Activated T-helper 2 cell treated with anti-CD3 and anti-CD28 coated beads, Interferon-gamma antibody, Interleukin-2, Interleukin-4, amounts not matched to agents 10 μg/mL and 5 μg/mL and 100 μg/mL, durations not matched to agents 14 hours and 24 hours and 36 hours (primary cell): ENCODE measurements at regions of chr6 and their contacts with region 1.

Region 1: GRCh38 chr6:26537846-26538571 is at the start of gene HMGN4:
- DNase-seq: peak; percentile 82
- H3K4me3 Mint-ChIP-seq: peak within 1 kb of the TSS; percentile 90
- H3K27ac Mint-ChIP-seq: peak within 1 kb of the TSS; percentile 96
- H3K4me1 Mint-ChIP-seq: peaks cover 41% of the 10 kb centered on the region
- H3K27me3 Mint-ChIP-seq: no peaks in the 10 kb centered on the region
- total RNA-seq, gene HMGN4: 92.2 and 99.4 TPM in 2 replicates

Region 2: GRCh38 chr6:26175428-26176181 is 362.4 kb before region 1 on chr6:
- intact Hi-C with region 1: loop called (anchors 5 kb)
- DNase-seq: peak; percentile 52
- H3K4me3 Mint-ChIP-seq: peak overlapping the region; percentile 56
- H3K27ac Mint-ChIP-seq: peak overlapping the region; percentile 63
- H3K4me1 Mint-ChIP-seq: peaks cover 45% of the 10 kb centered on the region
- H3K27me3 Mint-ChIP-seq: no peaks in the 10 kb centered on the region

Region 3: GRCh38 chr6:26375270-26375669 is 162.7 kb before region 1 on chr6:
- intact Hi-C with region 1: no loop called
- DNase-seq: no peak
- H3K4me3 Mint-ChIP-seq: no peak overlapping the region
- H3K27ac Mint-ChIP-seq: no peak overlapping the region
- H3K4me1 Mint-ChIP-seq: peaks cover 15% of the 10 kb centered on the region
- H3K27me3 Mint-ChIP-seq: no peaks in the 10 kb centered on the region

Region 4: DNA sequence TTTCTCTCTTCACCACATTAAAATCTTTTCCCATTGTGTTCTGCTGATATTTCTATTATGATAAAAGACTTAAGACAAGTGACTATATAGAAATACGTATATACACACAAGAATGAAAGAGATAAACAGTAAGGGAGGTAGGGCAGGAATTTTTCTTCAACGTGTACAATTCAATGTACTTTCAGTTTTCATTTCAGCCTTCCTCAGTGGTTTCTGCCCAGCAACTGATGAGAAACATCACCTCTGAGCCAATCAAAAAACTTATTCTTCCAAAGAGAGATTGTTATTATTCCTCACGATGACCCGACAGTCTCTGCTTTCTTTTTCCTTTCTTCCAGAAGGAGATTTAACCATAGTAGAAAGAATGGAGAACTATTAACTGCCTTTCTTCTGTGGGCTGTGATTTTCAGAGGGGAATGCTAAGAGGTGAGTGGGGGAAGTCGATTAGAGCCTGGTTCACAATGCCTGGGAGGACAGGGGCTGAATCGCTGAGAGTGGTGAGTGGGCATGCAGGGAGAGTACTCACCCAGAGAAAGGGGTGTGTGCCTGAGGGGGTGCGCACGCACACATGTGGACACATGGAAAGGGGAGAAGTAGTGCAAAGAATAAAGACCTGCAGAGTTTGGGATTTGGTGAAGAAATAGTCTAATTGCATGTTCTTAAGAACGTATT is 135.9 kb before region 1 on chr6 and contains the start of gene BTN3A1:
- intact Hi-C with region 1: loop called (anchors 5 kb)
- DNase-seq: peak; percentile 51
- H3K4me3 Mint-ChIP-seq: peak within 1 kb of the TSS; percentile 93
- H3K27ac Mint-ChIP-seq: peak within 1 kb of the TSS; percentile 98
- H3K4me1 Mint-ChIP-seq: peaks cover 39% of the 10 kb centered on the region
- H3K27me3 Mint-ChIP-seq: no peaks in the 10 kb centered on the region
- total RNA-seq, gene BTN3A1: 34.8 and 38.6 TPM in 2 replicates

Region 5: GRCh38 chr6:26520853-26521599 is 17.0 kb before region 1 on chr6:
- intact Hi-C with region 1: loop called (anchors 1 kb)
- DNase-seq: peak; percentile 78
- H3K4me3 Mint-ChIP-seq: peak overlapping the region; percentile 82
- H3K27ac Mint-ChIP-seq: peak overlapping the region; percentile 83
- H3K4me1 Mint-ChIP-seq: peaks cover 39% of the 10 kb centered on the region
- H3K27me3 Mint-ChIP-seq: peaks cover 2% of the 10 kb centered on the region

Region 6: GRCh38 chr6:26568601-26569432 is 30.8 kb after region 1 on chr6:
- intact Hi-C with region 1: loop called (anchors 1 kb)
- DNase-seq: peak; percentile 95
- H3K4me3 Mint-ChIP-seq: peak overlapping the region; percentile 93
- H3K27ac Mint-ChIP-seq: peak overlapping the region; percentile 78
- H3K4me1 Mint-ChIP-seq: peaks cover 32% of the 10 kb centered on the region
- H3K27me3 Mint-ChIP-seq: no peaks in the 10 kb centered on the region

Region 7: DNA sequence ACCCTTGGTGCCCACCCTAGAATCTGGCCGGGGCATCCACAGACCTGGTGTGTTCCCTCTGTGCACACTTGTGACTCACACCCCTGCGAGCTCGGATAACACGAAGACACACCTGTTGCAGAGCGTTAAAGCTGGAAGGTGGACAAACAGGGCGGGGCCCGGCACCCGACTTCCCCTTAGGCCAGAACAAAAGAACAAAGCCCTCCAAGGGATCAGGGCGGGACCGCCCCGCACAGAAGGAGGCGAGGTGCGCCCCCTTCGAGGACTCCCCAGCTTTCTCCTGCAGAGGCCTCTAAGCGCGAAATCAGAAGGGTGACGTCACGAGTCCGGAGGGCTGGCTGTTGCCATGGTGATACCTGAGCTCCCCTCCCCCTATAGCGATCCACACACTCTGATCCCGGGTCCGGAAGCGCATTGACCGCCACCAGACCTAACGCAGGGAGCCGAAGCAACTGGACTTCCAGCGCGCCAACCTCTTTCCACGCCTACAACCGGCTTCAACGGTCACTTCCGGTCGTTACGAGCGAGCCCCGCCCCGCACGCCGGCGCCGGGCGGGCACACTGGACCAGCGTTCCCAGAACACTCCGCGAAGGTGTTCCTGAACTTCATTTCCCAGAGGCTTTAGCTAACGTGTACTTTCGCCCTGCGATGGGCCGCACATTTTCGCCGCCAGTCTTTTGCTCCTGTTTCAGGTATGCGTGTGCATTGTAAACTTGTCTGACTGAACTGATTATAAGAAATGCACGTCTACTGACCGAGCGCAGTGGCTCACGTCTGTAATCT is 934.8 kb after region 1 on chr6 and contains the start of gene ZNF184:
- intact Hi-C with region 1: loop called (anchors 10 kb)
- DNase-seq: peak; percentile 87
- H3K4me3 Mint-ChIP-seq: peak within 1 kb of the TSS; percentile 92
- H3K27ac Mint-ChIP-seq: peak within 1 kb of the TSS; percentile 84
- H3K4me1 Mint-ChIP-seq: peaks cover 38% of the 10 kb centered on the region
- H3K27me3 Mint-ChIP-seq: peaks cover 3% of the 10 kb centered on the region
- total RNA-seq, gene ZNF184: 8.4 and 9.2 TPM in 2 replicates